ENCODE measurements at regions of chr1 and their contacts with region 1.

Region 1: GRCh38 chr1:53367503-53368304 is 39.8 kb upstream of the LRP8 start:
- DNase-seq: peak in 12 of 14 experiments; percentile 4 to 64 (median 34)
- ATAC-seq: peak; percentile 80
- H3K4me3 ChIP-seq: peak overlapping the region; percentile 54
- H3K4me3 Mint-ChIP-seq: peak overlapping the region; percentile 90
- H3K27ac ChIP-seq: peak overlapping the region; percentile 29 to 66
- H3K27ac Mint-ChIP-seq: peak overlapping the region; percentile 84
- H3K4me1 ChIP-seq: peaks cover 24% of the 10 kb centered on the region
- H3K4me1 Mint-ChIP-seq: peaks cover 48% of the 10 kb centered on the region
- H3K27me3 ChIP-seq: no peaks in the 10 kb centered on the region
- H3K27me3 Mint-ChIP-seq: no peaks in the 10 kb centered on the region
- CTCF ChIP-seq: no peak

Region 2: DNA sequence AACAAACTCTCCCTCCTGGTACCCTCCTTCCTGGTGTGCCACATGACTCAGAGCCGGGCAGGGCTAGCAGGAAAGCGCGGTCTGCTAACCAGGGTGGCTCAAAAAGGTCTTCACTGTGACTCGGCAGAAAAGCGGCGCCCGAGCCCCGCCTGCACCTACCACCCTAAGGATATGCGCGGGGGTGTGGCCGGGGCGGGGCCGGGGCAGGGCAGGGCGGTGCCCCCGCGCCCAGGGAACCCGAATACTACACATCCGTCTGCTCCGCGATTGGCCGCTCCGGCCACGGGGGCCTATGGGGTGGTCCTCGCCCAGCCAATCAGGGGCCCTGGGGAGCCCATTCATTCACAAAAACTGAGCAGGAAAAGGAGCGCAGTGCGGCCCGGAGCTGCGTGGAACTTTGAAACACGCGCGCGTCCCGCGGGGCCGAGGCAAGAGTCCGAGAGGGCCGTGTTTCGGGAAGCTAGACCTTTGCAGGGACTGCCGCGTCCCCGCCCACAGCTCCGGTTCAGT is 41.6 kb before region 1 on chr1:
- CTCF ChIA-PET with region 1: no interaction called
- POLR2A ChIA-PET with region 1: interaction called, 14 read pairs
- intact Hi-C with region 1: loop called in 1 of 2 experiments (anchors 1 kb)
- DNase-seq: peak; percentile 69 to 94 (median 87)
- ATAC-seq: peak; percentile 78
- H3K4me3 ChIP-seq: peak overlapping the region; percentile 86
- H3K4me3 Mint-ChIP-seq: peak overlapping the region; percentile 83
- H3K27ac ChIP-seq: peak overlapping the region in 1 of 2 donors; percentile 65
- H3K27ac Mint-ChIP-seq: peak overlapping the region; percentile 79
- H3K4me1 ChIP-seq: peaks cover 26% of the 10 kb centered on the region
- H3K4me1 Mint-ChIP-seq: peaks cover 17% of the 10 kb centered on the region
- H3K27me3 ChIP-seq: no peaks in the 10 kb centered on the region
- H3K27me3 Mint-ChIP-seq: no peaks in the 10 kb centered on the region
- CTCF ChIP-seq: no peak

Region 3: DNA sequence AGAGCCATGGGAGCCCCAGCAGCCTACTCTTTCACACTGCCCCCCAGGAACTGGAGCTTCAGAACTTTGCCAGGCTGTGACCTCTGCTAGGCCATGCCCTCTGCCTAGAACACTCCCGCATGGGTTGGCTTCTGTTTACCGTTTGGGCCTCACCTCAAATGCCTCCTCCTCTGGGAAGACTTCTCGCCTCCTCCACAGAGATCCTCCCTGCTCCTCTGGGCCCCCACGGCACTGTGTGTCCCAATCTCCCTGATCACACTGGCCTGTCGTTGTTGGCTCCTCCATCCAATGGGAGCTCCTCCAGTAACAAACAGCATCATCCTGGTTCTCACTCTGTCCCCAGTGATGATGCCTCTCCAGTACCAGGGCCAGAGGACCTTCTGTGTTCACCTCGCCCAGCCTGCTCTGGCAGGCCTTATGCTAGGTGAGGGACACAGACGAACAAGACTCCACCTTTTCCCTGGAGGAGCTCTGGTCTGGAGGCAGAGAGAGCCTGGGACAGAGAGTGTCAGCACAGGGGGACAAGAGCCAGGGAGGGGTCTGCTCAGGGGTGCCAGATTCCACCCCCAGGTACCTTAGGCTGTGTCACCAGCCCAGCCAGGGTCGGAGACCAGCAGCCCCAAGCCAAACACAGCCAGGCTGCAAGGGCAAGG is 35.7 kb before region 1 on chr1:
- CTCF ChIA-PET with region 1: no interaction called
- POLR2A ChIA-PET with region 1: interaction called, 14 read pairs
- intact Hi-C with region 1: loop called in 1 of 2 experiments (anchors 2 kb)
- DNase-seq: peak in 1 of 14 experiments; percentile 7
- ATAC-seq: no peak
- H3K4me3 ChIP-seq: no peak overlapping the region
- H3K4me3 Mint-ChIP-seq: peak overlapping the region; percentile 35
- H3K27ac ChIP-seq: no peak overlapping the region
- H3K27ac Mint-ChIP-seq: no peak overlapping the region
- H3K4me1 ChIP-seq: peaks cover 15% of the 10 kb centered on the region
- H3K4me1 Mint-ChIP-seq: peaks cover 16% of the 10 kb centered on the region
- H3K27me3 ChIP-seq: no peaks in the 10 kb centered on the region
- H3K27me3 Mint-ChIP-seq: no peaks in the 10 kb centered on the region
- CTCF ChIP-seq: no peak

Measured in CD4-positive, alpha-beta T cell (primary cell).